ENCODE measurements at regions of chr6 and their contacts with region 1.

Region 1: GRCh38 chr6:30206799-30207618 is 6.2 kb downstream of the TRIM26 start:
- DNase-seq: no peak
- ATAC-seq: no peak
- H3K4me3 ChIP-seq: peak overlapping the region in 1 of 5 experiments; percentile 2
- H3K4me3 Mint-ChIP-seq: peak overlapping the region; percentile 45
- H3K27ac ChIP-seq: no peak overlapping the region
- H3K27ac Mint-ChIP-seq: peak overlapping the region; percentile 63
- H3K4me1 ChIP-seq: peaks cover 57 to 65% of the 10 kb centered on the region in 2 donors
- H3K4me1 Mint-ChIP-seq: peaks cover 70% of the 10 kb centered on the region
- H3K27me3 ChIP-seq: no peaks in the 10 kb centered on the region
- H3K27me3 Mint-ChIP-seq: no peaks in the 10 kb centered on the region
- CTCF ChIP-seq: no peak

Region 2: DNA sequence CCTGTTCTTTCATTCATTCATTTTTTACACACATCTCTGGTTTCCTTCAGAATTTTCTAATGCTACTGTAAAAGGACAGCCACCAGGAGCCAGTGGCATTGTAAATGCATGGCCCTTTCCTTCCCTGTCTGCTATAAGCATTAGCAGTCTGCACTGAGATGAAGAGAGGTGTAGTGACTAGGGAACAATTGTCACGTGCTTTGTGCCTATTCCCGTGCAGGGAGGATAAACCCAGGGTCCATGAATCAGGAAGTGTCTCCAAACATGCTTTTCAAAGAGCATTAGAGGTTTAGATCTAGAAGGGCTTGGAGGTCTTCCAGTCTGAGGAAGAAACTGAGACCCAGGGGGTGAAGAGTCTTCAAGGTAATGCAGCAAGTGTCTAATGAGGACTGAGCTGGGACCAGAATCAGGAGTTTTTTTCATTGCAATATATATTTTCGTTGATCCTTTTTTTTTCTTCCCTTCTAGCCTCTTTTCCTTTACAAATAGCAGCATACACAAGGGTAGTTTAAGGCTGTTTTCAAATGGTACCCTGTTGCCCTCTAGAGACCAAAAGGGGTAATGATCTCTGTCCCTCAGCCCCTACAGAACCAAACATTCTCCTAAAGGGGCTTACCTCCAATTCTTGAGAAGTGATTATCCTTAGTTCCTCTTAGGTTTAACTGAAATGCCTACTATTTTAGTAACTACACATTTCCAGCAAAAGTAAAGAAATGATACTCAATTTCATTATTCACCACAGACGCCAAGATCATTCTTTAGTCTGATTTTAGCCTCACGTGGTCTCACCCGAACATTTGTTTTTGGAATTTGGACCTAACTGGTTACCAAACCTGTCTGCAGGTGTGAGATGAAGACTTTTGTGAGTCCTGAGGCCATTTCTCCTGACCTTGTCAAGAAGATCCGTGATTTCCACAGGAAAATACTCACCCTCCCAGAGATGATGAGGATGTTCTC is 37.1 kb before region 1 on chr6:
- CTCF ChIA-PET with region 1: no interaction called
- POLR2A ChIA-PET with region 1: interaction called, 4 read pairs
- intact Hi-C with region 1: loop called (anchors 5 kb)
- DNase-seq: peak; percentile 63
- ATAC-seq: peak; percentile 79
- H3K4me3 ChIP-seq: no peak overlapping the region
- H3K4me3 Mint-ChIP-seq: no peak overlapping the region
- H3K27ac ChIP-seq: no peak overlapping the region
- H3K27ac Mint-ChIP-seq: no peak overlapping the region
- H3K4me1 ChIP-seq: peaks cover 8 to 12% of the 10 kb centered on the region in 2 donors
- H3K4me1 Mint-ChIP-seq: peaks cover 4% of the 10 kb centered on the region
- H3K27me3 ChIP-seq: peaks cover 0 to 49% (median 33%) of the 10 kb centered on the region in 4 experiments
- H3K27me3 Mint-ChIP-seq: peaks cover 67% of the 10 kb centered on the region
- CTCF ChIP-seq: peak; percentile 83

Region 3: GRCh38 chr6:30244560-30244959 is 37.6 kb after region 1 on chr6:
- CTCF ChIA-PET with region 1: no interaction called
- POLR2A ChIA-PET with region 1: no interaction called
- intact Hi-C with region 1: no loop called
- DNase-seq: no peak
- ATAC-seq: no peak
- H3K4me3 ChIP-seq: no peak overlapping the region
- H3K4me3 Mint-ChIP-seq: no peak overlapping the region
- H3K27ac ChIP-seq: no peak overlapping the region
- H3K27ac Mint-ChIP-seq: no peak overlapping the region
- H3K4me1 ChIP-seq: no peaks in the 10 kb centered on the region
- H3K4me1 Mint-ChIP-seq: no peaks in the 10 kb centered on the region
- H3K27me3 ChIP-seq: peaks cover 0 to 5% (median 3%) of the 10 kb centered on the region in 4 experiments
- H3K27me3 Mint-ChIP-seq: peaks cover 30% of the 10 kb centered on the region
- CTCF ChIP-seq: no peak

Region 4: DNA sequence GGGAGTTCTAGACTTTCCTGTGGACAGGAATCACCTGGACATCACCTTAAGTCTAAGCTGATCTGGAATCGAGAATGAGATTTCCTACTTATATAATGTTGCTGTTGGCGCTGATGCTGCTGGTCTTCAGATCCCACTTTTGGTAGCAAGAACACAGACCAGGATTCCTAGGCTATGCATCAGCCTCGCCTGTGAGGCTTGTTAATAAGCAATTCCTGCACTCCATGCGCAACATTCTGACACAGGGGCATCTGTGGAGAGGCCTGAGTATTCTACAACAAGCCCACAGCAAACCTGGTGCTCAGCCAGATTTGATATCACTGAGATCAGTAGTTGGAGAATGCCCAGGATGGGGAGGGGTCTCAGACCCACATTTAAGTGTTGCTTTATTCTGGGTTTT is 58.2 kb after region 1 on chr6:
- CTCF ChIA-PET with region 1: no interaction called
- POLR2A ChIA-PET with region 1: no interaction called
- intact Hi-C with region 1: no loop called
- DNase-seq: no peak
- ATAC-seq: no peak
- H3K4me3 ChIP-seq: no peak overlapping the region
- H3K4me3 Mint-ChIP-seq: no peak overlapping the region
- H3K27ac ChIP-seq: no peak overlapping the region
- H3K27ac Mint-ChIP-seq: no peak overlapping the region
- H3K4me1 ChIP-seq: peaks cover 7 to 14% of the 10 kb centered on the region in 2 donors
- H3K4me1 Mint-ChIP-seq: peaks cover 15% of the 10 kb centered on the region
- H3K27me3 ChIP-seq: no peaks in the 10 kb centered on the region
- H3K27me3 Mint-ChIP-seq: no peaks in the 10 kb centered on the region
- CTCF ChIP-seq: no peak

Measured in B cell (primary cell).